CD8-positive, alpha-beta T cell (primary cell): ENCODE measurements at regions of chr2 and their contacts with region 1.

Region 1: DNA sequence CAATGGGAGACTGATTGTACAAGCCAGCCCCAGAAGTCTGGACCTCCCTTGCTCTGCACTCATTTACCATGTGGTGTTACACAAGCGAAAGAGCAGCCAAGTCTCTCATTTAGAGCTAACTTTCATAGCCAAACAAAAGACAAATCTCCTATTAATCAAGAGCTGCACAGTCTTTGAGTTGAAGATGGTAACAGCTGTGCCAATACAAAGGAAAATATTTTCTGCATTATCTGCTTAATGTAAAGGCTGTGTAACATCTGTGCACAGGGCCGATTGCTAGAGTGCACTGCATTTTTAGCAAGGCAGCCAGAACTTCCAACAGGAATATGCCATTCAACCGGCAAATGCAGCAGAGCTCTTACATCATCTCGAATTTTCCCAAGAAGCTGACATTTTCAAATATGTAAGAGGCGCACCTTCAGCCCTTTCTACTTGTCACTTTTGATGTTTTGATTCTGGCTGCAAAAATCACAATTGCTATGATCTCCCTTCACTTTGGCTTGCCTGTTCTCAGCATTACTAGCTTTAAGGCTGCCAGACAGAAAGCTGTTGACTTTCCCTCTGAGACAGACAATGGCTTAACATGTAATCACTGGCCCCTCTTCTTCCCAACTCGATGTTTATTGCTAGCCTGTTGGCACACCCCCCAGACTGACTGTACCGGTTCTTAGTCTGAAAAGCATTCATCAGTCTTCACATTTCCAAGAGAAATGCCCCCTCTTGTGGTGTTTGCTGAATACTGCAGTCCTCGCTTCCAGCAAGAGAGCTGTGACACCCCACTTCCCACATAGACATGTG is 96.9 kb upstream of the TANK start:
- DNase-seq: peak; percentile 26 to 76 (median 59)
- ATAC-seq: peak; percentile 96
- H3K4me3 ChIP-seq: no peak overlapping the region
- H3K4me3 Mint-ChIP-seq: no peak overlapping the region
- H3K27ac ChIP-seq: no peak overlapping the region
- H3K27ac Mint-ChIP-seq: no peak overlapping the region
- H3K4me1 ChIP-seq: no peaks in the 10 kb centered on the region
- H3K4me1 Mint-ChIP-seq: peaks cover 4% of the 10 kb centered on the region
- H3K27me3 ChIP-seq: no peaks in the 10 kb centered on the region
- H3K27me3 Mint-ChIP-seq: no peaks in the 10 kb centered on the region
- CTCF ChIP-seq: peak; percentile 93

Region 2: DNA sequence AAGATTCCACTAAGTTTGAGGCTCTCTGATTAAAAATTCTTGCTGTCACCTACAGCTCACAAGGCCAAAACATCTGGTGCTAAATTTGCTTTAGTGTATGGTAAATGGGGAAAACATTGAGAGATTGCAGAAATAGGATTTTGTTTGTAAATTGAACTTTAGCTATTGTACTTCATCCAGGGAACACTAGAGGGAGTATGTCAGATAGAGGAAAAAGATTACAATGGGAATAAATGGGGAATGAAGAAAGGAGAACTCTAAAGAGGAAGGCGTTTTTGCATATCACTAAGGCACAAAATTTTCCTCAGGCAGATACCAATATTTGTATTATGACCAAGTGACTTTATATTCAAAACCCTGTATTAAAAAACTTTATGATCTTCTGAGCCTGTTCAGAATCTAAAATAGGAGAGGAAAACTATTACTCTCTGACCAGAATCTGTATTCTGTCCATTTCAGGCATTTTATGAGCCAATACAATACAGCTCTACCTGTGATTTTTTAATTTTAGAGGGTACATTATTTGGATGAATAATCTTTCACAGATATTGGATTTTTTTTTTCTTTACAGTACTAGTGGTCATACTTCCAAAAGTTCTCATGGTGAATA is 811.0 kb before region 1 on chr2:
- CTCF ChIA-PET with region 1: interaction called, 8 read pairs
- POLR2A ChIA-PET with region 1: no interaction called
- intact Hi-C with region 1: loop called (anchors 1 to 5 kb)
- DNase-seq: peak in 2 of 9 experiments; percentile 36 to 46
- ATAC-seq: no peak
- H3K4me3 ChIP-seq: no peak overlapping the region
- H3K4me3 Mint-ChIP-seq: no peak overlapping the region
- H3K27ac ChIP-seq: no peak overlapping the region
- H3K27ac Mint-ChIP-seq: no peak overlapping the region
- H3K4me1 ChIP-seq: no peaks in the 10 kb centered on the region
- H3K4me1 Mint-ChIP-seq: no peaks in the 10 kb centered on the region
- H3K27me3 ChIP-seq: peaks cover 0 to 3% of the 10 kb centered on the region in 2 experiments
- H3K27me3 Mint-ChIP-seq: peaks cover 4% of the 10 kb centered on the region
- CTCF ChIP-seq: peak; percentile 98

Region 3: GRCh38 chr2:160353166-160353565 is 710.2 kb before region 1 on chr2:
- CTCF ChIA-PET with region 1: no interaction called
- POLR2A ChIA-PET with region 1: no interaction called
- intact Hi-C with region 1: loop called in 1 of 2 experiments (anchors 5 kb)
- DNase-seq: peak in 4 of 9 experiments; percentile 35 to 65 (median 46)
- ATAC-seq: peak; percentile 79
- H3K4me3 ChIP-seq: no peak overlapping the region
- H3K4me3 Mint-ChIP-seq: no peak overlapping the region
- H3K27ac ChIP-seq: no peak overlapping the region
- H3K27ac Mint-ChIP-seq: peak overlapping the region; percentile 60
- H3K4me1 ChIP-seq: peaks cover 18% of the 10 kb centered on the region
- H3K4me1 Mint-ChIP-seq: peaks cover 77% of the 10 kb centered on the region
- H3K27me3 ChIP-seq: no peaks in the 10 kb centered on the region
- H3K27me3 Mint-ChIP-seq: no peaks in the 10 kb centered on the region
- CTCF ChIP-seq: peak; percentile 64

Region 4: GRCh38 chr2:160719116-160719515 is 344.2 kb before region 1 on chr2:
- CTCF ChIA-PET with region 1: no interaction called
- POLR2A ChIA-PET with region 1: no interaction called
- intact Hi-C with region 1: no loop called
- DNase-seq: no peak
- ATAC-seq: no peak
- H3K4me3 ChIP-seq: no peak overlapping the region
- H3K4me3 Mint-ChIP-seq: no peak overlapping the region
- H3K27ac ChIP-seq: no peak overlapping the region
- H3K27ac Mint-ChIP-seq: no peak overlapping the region
- H3K4me1 ChIP-seq: no peaks in the 10 kb centered on the region
- H3K4me1 Mint-ChIP-seq: no peaks in the 10 kb centered on the region
- H3K27me3 ChIP-seq: no peaks in the 10 kb centered on the region
- H3K27me3 Mint-ChIP-seq: peaks cover 2% of the 10 kb centered on the region
- CTCF ChIP-seq: no peak

Region 5: GRCh38 chr2:161010556-161010955 is 52.8 kb before region 1 on chr2:
- CTCF ChIA-PET with region 1: no interaction called
- POLR2A ChIA-PET with region 1: no interaction called
- intact Hi-C with region 1: no loop called
- DNase-seq: no peak
- ATAC-seq: no peak
- H3K4me3 ChIP-seq: no peak overlapping the region
- H3K4me3 Mint-ChIP-seq: no peak overlapping the region
- H3K27ac ChIP-seq: no peak overlapping the region
- H3K27ac Mint-ChIP-seq: no peak overlapping the region
- H3K4me1 ChIP-seq: no peaks in the 10 kb centered on the region
- H3K4me1 Mint-ChIP-seq: no peaks in the 10 kb centered on the region
- H3K27me3 ChIP-seq: no peaks in the 10 kb centered on the region
- H3K27me3 Mint-ChIP-seq: peaks cover 19% of the 10 kb centered on the region
- CTCF ChIP-seq: no peak

Region 6: DNA sequence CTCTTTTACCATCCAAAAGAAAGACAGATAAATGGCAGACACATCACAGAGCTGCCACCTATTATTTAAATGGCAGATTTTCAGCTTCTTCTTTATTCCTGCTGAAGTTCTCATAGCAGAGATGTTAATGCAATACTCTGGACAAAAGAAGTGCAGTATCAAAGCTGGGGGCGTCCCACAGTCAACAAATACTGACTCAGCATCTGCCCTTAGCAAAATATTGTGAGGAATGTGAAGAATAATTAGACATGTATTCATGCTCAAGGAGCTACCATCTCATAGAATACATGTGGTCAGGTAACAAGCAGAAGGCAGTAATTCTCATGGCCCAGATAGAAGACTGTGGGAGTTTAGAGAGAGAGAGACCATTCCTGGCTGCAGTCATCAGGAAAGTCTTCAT is 11.1 kb before region 1 on chr2:
- CTCF ChIA-PET with region 1: interaction called, 25 read pairs
- POLR2A ChIA-PET with region 1: no interaction called
- intact Hi-C with region 1: no loop called
- DNase-seq: no peak
- ATAC-seq: no peak
- H3K4me3 ChIP-seq: no peak overlapping the region
- H3K4me3 Mint-ChIP-seq: no peak overlapping the region
- H3K27ac ChIP-seq: no peak overlapping the region
- H3K27ac Mint-ChIP-seq: no peak overlapping the region
- H3K4me1 ChIP-seq: no peaks in the 10 kb centered on the region
- H3K4me1 Mint-ChIP-seq: no peaks in the 10 kb centered on the region
- H3K27me3 ChIP-seq: no peaks in the 10 kb centered on the region
- H3K27me3 Mint-ChIP-seq: peaks cover 12% of the 10 kb centered on the region
- CTCF ChIP-seq: no peak

Region 7: GRCh38 chr2:161085041-161085598 is 21.8 kb after region 1 on chr2:
- CTCF ChIA-PET with region 1: interaction called, 16 read pairs
- POLR2A ChIA-PET with region 1: interaction called, 3 read pairs
- intact Hi-C with region 1: no loop called
- DNase-seq: no peak
- ATAC-seq: no peak
- H3K4me3 ChIP-seq: no peak overlapping the region
- H3K4me3 Mint-ChIP-seq: no peak overlapping the region
- H3K27ac ChIP-seq: no peak overlapping the region
- H3K27ac Mint-ChIP-seq: no peak overlapping the region
- H3K4me1 ChIP-seq: no peaks in the 10 kb centered on the region
- H3K4me1 Mint-ChIP-seq: peaks cover 6% of the 10 kb centered on the region
- H3K27me3 ChIP-seq: no peaks in the 10 kb centered on the region
- H3K27me3 Mint-ChIP-seq: no peaks in the 10 kb centered on the region
- CTCF ChIP-seq: no peak